Dorsolateral prefrontal cortex (tissue), 120 donors: ENCODE measurements at regions of chr15 and their contacts with region 1.

Region 1: GRCh38 chr15:63402498-63403253 is 21.0 kb upstream of the CA12 start:
- DNase-seq: no peak
- H3K4me3 ChIP-seq: no peak overlapping the region
- H3K27ac ChIP-seq: no peak overlapping the region
- H3K27me3 ChIP-seq: no peaks in the 10 kb centered on the region
- CTCF ChIP-seq: peak; percentile 38 to 83 (median 71)

Region 2: DNA sequence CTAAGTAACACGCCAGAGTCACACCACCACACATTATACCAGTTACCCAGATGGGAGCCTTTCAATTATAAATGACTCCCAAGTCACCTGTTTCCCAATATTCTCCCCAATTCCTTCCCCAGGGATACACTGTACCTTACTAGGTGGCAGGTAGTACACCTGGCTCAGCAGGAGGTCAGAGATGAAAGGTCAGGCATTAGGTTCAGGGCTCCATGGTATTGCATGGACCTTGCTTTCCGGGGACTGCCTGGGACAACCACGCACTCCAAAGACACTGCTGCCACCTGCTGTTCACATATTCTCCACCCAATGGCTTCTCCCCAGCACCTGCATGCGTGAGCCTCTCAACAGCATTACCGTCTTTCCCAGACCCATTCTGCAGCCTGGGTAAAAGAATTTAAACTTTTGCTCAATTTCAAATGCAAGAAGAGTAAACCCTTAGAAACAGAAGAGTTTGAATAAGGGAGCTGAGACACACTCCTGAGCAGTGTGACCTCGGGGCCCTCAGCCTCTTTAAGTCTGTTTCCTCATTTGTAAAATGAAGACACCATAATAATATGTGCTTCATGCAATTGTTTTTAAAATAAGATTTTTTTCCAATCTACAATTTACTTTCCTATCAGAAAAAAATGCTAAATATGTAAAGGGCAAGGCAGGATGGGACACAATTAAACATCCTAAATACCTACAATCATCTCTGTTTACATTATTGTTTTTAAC is 309.0 kb before region 1 on chr15:
- intact Hi-C with region 1: loop called in 1 of 2 experiments (anchors 5 kb)
- DNase-seq: peak; percentile 59 to 86 (median 80)
- H3K4me3 ChIP-seq: no peak overlapping the region
- H3K27ac ChIP-seq: no peak overlapping the region
- H3K27me3 ChIP-seq: no peaks in the 10 kb centered on the region
- CTCF ChIP-seq: peak; percentile 50 to 98 (median 90)

Region 3: DNA sequence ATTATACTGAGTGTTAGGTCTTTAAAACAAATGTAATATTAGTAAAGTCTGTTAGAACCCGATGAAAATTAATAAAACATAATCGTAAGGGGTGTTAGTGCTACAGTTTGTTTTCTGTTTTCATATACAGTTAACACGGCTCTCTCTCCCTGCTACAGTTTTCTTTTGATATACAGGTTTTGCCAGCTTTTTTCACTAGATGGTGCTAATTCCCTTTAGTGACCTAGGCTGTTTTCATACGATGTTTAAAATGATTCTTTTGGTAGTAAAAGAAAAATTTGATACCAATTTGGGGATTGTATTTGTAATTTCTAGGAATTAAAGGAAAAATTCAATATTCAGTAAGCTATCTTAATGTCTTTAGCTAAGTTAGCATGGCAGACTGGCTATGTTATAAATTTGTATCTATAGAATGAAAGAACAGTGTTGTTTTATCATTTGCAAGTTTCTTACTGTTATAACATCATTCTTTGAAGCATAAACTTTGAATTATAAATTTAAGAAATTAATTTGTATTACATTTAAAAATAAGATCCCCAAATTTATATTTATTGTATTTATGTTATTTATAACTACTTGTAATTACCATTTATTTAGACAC is 113.8 kb before region 1 on chr15:
- intact Hi-C with region 1: loop called (anchors 2 to 5 kb)
- DNase-seq: no peak
- H3K4me3 ChIP-seq: peak overlapping the region in 8 of 59 donors; percentile 2 to 24 (median 10)
- H3K27ac ChIP-seq: peak overlapping the region in 19 of 59 donors; percentile 0 to 78 (median 32)
- H3K27me3 ChIP-seq: no peaks in the 10 kb centered on the region
- CTCF ChIP-seq: peak; percentile 50 to 92 (median 74)